ENCODE measurements at regions of chr17 and their contacts with region 1.

Region 1: GRCh38 chr17:35849469-35850348 is 19.0 kb downstream of the HEATR9 start:
- DNase-seq: peak; percentile 54 to 72
- H3K4me3 ChIP-seq: no peak overlapping the region
- H3K4me1 ChIP-seq: no peaks in the 10 kb centered on the region
- H3K27me3 ChIP-seq: no peaks in the 10 kb centered on the region

Region 2: GRCh38 chr17:35498448-35499178 is 351.1 kb before region 1 on chr17:
- in situ Hi-C with region 1: no loop called
- DNase-seq: no peak
- H3K4me3 ChIP-seq: no peak overlapping the region
- H3K4me1 ChIP-seq: no peaks in the 10 kb centered on the region
- H3K27me3 ChIP-seq: peaks cover under 1% of the 10 kb centered on the region; the same call in 1 of the 2 replicates

Region 3: DNA sequence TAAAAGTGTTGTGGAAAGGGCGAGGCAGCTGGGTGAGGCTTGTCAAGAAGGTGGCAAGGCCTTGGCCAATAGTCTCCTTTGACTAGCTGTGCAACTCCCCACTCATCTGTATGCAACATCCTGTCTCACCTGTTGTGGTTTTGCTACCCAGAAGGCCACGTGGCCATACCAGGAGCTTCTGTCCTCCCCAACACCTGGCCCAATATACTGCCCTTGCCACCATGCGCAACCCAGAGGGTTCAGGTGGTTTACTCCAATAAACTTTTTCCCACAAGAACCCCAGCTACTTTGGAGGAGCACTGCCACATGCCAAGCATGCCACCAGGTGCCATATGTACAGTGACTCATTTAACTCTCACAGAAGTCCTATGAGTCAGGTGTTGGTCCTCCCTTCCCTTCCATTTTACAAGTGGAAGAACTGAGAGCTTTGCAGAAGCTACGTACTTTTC is 674.7 kb after region 1 on chr17:
- in situ Hi-C with region 1: loop called (anchors 25 kb)
- DNase-seq: no peak
- H3K4me3 ChIP-seq: no peak overlapping the region
- H3K4me1 ChIP-seq: peaks cover 4% of the 10 kb centered on the region; the same call in 1 of the 2 replicates
- H3K27me3 ChIP-seq: no peaks in the 10 kb centered on the region

Measured in HAP-1 (cell line).